Posterior cingulate gyrus (tissue), 11 donors: ENCODE measurements at regions of chr10 and their contacts with region 1.

Region 1: GRCh38 chr10:7417103-7417623 is 6.3 kb upstream of the SFMBT2 start:
- DNase-seq: no peak

Region 2: GRCh38 chr10:6416892-6417512 is 1000.2 kb before region 1 on chr10:
- intact Hi-C with region 1: loop called (anchors 5 kb)
- DNase-seq: no peak

Region 3: GRCh38 chr10:7121154-7121810 is 295.9 kb before region 1 on chr10:
- intact Hi-C with region 1: loop called (anchors 5 kb)
- DNase-seq: peak in 7 of 10 donors; percentile 37 to 88 (median 68)

Region 4: DNA sequence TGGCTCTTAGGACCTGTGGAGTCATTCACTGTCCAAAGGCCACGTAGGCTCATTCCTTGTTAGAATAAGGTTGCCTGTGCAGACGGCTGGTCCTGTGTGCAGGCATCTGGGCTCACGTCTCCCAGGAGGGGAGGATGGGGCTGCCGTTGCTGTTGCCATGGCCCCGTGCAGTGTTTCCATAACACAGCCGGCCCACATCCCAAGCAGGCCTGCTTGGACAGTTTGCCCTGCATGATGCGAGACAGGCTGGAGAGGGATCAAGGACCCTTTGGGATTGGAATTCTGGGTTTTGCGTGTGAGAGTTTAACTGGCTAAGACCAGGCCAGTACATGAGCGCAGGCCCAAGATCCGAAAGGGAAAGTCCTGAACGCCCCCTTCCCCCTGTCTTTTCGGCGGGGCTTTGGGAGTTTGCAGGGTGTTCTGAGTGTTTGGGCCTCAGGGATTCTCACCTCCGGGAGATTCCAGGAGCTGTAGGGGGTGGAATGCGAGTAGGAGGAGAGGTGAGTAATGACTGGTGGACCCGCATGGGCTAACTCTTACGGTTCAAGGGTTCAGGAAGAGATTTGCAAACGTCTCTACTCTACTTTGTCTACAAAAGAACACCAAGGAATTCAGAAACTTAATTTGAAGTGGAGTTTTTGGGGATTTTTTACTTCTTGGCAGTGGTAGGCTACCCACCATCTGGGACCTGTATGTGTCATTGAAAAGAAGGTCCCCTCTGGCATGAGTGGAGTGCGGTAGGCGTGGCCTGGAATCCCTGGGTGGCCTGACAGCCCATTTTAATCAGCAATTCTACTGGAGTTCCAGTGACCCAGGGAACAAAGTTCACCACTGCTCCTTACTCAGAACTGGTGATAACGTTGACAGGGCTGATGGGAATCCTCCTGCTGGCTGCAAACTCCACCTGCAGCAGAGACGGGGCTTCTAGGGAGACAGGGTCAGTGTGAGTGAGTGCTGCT is 124.3 kb after region 1 on chr10:
- intact Hi-C with region 1: no loop called
- DNase-seq: no peak